ENCODE measurements at regions of chr1 and their contacts with region 1.

Region 1: GRCh38 chr1:904310-904950 is 19.3 kb upstream of the SAMD11 start:
- DNase-seq: peak; percentile 43
- ATAC-seq: peak; percentile 81
- H3K4me3 ChIP-seq: peak overlapping the region; percentile 19 to 48
- H3K27ac ChIP-seq: peak overlapping the region; percentile 55; the same call in 1 of the 2 replicates
- H3K4me1 ChIP-seq: peaks cover 24 to 40% of the 10 kb centered on the region in 2 experiments
- H3K27me3 ChIP-seq: no peaks in the 10 kb centered on the region
- CTCF ChIP-seq: peak; percentile 72 to 84 (median 77)
- POLR2A ChIP-seq: no peak
- RAD21 ChIP-seq: peak; percentile 92

Region 2: GRCh38 chr1:923131-923990 is 18.9 kb after region 1 on chr1 and contains the start of gene SAMD11:
- CTCF ChIA-PET with region 1: interaction called, 4 read pairs
- POLR2A ChIA-PET with region 1: no interaction called
- RAD21 ChIA-PET with region 1: no interaction called
- intact Hi-C with region 1: loop called (anchors 1 kb)
- DNase-seq: peak; percentile 54
- ATAC-seq: peak; percentile 39
- H3K4me3 ChIP-seq: peak within 1 kb of the TSS; percentile 43 to 61
- H3K27ac ChIP-seq: peak within 1 kb of the TSS; percentile 74; the same call in 1 of the 2 replicates
- H3K4me1 ChIP-seq: peaks cover 37 to 49% of the 10 kb centered on the region in 2 experiments
- H3K27me3 ChIP-seq: peaks cover 32% of the 10 kb centered on the region; the same call in 1 of the 2 replicates
- CTCF ChIP-seq: no peak
- POLR2A ChIP-seq: no peak
- RAD21 ChIP-seq: no peak
- total RNA-seq, gene SAMD11: 11.5 TPM

Region 3: DNA sequence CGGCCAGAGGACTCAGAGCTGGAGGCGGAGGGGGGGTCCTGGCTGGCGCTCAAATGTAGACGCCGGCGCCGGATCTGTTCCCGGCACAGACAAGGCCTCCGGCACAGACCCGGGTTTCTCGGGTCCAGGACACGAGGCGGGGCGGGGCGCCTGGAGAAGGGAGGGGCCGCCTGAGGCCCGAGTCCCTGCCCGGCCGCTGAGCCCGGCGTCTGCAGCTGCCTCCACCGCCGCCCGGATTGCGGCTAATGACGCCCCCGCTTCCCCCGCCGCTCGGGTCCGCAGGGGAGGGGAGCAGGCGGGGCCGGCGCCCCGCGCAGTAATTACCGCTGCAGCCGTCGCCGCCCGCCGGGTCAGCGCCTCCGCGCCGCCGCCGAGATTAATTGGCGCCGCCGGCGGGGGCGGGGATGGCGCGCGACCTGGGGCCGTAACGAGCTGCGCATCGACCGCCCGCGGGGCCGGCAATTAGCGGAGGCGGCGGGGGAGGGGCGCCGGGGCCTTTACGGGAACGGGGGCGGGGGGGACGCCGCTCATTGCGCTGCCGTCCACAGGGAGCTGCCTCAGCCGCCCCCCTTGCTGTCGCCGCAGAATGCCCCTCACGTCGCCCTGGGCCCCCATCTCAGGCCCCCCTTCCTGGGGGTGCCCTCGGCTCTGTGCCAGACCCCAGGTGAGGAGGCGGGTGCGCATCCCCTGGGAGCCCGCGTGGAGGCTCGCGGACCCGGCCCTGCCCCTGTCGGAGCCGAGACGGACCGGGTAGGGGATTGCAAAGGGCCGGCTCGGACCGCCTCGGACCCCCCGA is 37.4 kb after region 1 on chr1:
- CTCF ChIA-PET with region 1: interaction called, 14 read pairs
- POLR2A ChIA-PET with region 1: no interaction called
- RAD21 ChIA-PET with region 1: interaction called in 1 of 2 experiments, 3 read pairs
- intact Hi-C with region 1: loop called (anchors 2 kb)
- DNase-seq: no peak
- ATAC-seq: peak; percentile 60
- H3K4me3 ChIP-seq: peak overlapping the region; percentile 38 to 50
- H3K27ac ChIP-seq: peak overlapping the region; percentile 58; the same call in 1 of the 2 replicates
- H3K4me1 ChIP-seq: peaks cover 49 to 62% of the 10 kb centered on the region in 2 experiments
- H3K27me3 ChIP-seq: peaks cover 10% of the 10 kb centered on the region; the same call in 1 of the 2 replicates
- CTCF ChIP-seq: no peak
- POLR2A ChIP-seq: no peak
- RAD21 ChIP-seq: no peak

Region 4: DNA sequence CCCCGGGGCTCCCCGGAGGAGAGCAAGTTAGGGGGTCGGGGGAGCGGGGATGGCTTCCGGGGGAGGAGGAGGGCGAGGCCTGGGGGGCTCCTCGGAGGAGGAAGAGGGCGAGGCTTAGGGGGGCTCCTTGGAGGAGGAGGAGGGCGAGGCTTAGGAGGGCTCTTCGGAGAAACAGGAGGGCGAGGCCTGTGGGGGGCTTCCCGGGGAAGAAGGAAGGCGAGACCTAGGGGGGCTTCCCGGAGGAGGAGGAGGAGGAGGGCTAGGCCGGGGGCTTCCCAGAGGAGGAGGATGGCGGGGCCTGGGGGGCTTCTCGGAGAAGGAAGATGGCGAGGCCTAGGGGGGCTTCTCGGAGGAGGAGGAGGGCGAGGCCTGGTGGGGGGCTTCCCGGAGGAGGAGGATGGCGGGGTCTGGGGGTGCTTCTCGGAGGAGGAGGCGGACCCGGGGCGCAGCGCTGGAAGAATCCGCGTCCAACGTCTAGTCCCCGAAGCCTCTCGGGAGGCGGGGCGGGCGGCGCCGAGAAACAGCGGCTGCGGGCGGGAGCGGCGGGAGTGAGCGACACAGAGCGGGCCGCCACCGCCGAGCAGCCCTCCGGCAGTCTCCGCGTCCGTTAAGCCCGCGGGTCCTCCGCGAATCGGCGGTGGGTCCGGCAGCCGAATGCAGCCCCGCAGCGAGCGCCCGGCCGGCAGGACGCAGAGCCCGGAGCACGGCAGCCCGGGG is 55.8 kb after region 1 on chr1 and contains the start of gene KLHL17:
- CTCF ChIA-PET with region 1: interaction called, 3 read pairs
- POLR2A ChIA-PET with region 1: no interaction called
- RAD21 ChIA-PET with region 1: no interaction called
- intact Hi-C with region 1: loop called (anchors 5 kb)
- DNase-seq: no peak
- ATAC-seq: peak; percentile 72
- H3K4me3 ChIP-seq: peak within 1 kb of the TSS; percentile 68 to 93
- H3K27ac ChIP-seq: peak within 1 kb of the TSS; percentile 99
- H3K4me1 ChIP-seq: peaks cover 12 to 20% of the 10 kb centered on the region in 2 experiments
- H3K27me3 ChIP-seq: no peaks in the 10 kb centered on the region
- CTCF ChIP-seq: no peak
- POLR2A ChIP-seq: no peak
- RAD21 ChIP-seq: no peak
- total RNA-seq, gene KLHL17: 100.0 TPM